CD14-positive monocyte (primary cell): ENCODE measurements at regions of chr20 and their contacts with region 1.

Region 1: DNA sequence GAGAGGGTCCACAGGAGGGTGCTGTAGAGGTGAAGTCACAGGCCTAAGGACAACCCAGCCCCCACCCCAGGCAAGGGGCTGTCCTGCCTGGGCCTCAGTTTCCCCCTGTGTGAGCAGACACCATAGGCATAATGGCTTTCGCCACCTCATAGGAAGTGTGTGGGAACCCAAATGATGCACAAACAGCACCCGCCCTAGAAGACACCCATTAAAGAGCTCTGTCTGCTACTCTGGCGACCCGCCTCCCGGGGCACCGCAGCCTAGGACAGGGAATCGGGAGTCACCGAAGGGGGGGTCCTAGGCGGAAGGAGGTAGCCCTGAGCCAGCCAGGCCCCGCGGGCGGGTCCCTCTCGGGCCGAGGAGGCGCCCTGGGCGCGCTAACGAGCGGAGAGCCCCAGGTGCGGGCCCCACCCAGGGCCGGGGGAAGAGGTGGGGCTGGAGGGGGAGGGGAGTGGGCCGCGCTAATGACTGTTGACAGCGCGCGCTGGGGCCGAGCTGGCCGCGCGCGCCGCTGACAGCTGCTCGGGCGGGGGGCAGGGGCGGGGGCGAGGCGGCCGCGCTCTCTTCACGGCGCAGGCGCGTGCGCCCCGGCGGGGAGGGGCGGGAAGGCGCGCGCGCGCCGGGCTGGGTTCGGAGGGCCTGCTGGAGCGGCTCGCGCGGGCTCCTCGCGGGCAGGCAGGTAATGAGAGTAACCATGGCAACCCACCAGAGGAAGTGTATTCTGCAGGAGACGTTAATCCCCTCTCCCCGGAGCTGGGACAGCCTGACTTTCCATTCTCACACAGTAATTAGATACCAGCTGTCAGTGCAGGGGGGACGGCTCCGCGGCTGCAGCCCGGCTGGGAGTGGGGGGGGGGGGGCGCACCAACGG is 48.9 kb downstream of the NOL4L start:
- DNase-seq: peak in 1 of 3 donors; percentile 33
- H3K4me3 ChIP-seq: peak overlapping the region; percentile 20 to 73 (median 36)
- H3K4me3 Mint-ChIP-seq: peak overlapping the region; percentile 75 to 78
- H3K27ac ChIP-seq: no peak overlapping the region
- H3K27ac Mint-ChIP-seq: peak overlapping the region in 1 of 7 donors; percentile 58
- H3K4me1 ChIP-seq: peaks cover 46 to 56% of the 10 kb centered on the region in 2 donors
- H3K4me1 Mint-ChIP-seq: peaks cover 55% of the 10 kb centered on the region
- H3K27me3 ChIP-seq: no peaks in the 10 kb centered on the region
- H3K27me3 Mint-ChIP-seq: peaks cover 2 to 20% (median 8%) of the 10 kb centered on the region in 3 donors
- CTCF ChIP-seq: no peak

Region 2: DNA sequence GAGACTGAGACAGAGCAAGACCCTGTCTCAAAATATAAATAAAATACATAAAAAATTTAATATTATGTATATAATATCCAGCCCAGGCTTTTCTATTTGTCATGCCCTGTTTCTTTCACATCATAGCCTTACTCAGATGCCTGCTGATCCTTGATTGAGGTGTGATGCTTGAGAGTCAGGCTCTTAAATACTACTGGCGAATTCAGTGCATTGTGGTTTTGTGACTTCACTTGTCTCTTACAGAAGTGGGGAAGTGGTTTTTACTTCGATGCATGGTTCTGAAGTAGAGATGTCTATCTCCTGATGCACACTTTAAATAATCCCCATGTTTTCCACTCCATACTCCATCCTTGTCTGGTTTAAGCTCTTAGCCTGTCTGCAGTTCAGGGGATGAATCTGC is 148.9 kb before region 1 on chr20:
- intact Hi-C with region 1: no loop called
- DNase-seq: no peak
- H3K4me3 ChIP-seq: no peak overlapping the region
- H3K4me3 Mint-ChIP-seq: no peak overlapping the region
- H3K27ac ChIP-seq: no peak overlapping the region
- H3K27ac Mint-ChIP-seq: no peak overlapping the region
- H3K4me1 ChIP-seq: peaks cover 10 to 13% of the 10 kb centered on the region in 2 donors
- H3K4me1 Mint-ChIP-seq: peaks cover 21% of the 10 kb centered on the region
- H3K27me3 ChIP-seq: no peaks in the 10 kb centered on the region
- H3K27me3 Mint-ChIP-seq: no peaks in the 10 kb centered on the region
- CTCF ChIP-seq: no peak

Region 3: DNA sequence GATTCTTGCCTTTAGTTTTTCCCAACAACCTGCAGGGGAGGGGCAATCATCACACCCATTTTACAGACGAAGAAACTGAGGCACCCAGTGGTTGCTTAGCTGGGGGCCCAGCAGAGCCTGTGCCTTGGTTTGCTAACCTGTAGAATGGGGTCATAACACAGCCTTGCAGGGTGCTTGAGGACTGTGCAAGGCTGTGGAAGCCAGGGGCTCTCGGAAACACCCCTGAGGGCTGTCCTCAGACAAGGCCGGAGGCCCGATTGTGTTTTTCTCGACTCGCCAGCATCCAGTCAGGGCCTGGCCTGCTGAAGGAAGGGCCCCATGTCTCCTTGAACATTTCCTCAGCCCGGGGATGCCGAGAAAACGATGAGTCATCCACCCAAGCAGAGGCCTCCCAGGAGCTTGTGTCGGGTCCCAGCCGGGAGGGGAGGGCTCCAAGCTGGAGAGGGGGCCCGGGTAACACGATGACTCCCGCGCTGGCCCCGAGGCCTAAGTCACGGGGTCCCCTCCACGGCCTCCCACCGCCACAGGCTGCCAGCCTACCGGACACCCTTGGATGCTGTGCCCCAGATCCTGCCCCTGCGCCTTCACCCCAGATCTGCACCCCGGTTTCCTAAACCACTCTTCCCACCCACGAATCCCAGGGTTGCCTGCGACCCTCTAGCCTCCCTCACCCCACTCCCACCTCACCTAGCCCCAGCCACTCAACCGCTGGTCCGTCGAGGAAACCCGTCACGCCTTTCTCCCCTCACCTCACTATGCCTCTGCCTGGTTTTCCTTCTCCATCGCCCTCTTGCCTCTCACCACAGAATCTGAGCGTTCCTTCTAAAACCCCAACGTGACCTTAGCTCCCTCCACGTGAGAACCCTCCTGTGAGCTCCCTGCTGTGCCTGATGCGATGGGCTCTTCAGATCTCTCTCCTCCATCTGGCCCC is 38.4 kb after region 1 on chr20:
- intact Hi-C with region 1: loop called in 1 of 2 experiments (anchors 5 kb)
- DNase-seq: peak; percentile 68 to 91 (median 72)
- H3K4me3 ChIP-seq: peak overlapping the region in 1 of 3 experiments; percentile 24
- H3K4me3 Mint-ChIP-seq: peak overlapping the region in 1 of 2 donors; percentile 7
- H3K27ac ChIP-seq: no peak overlapping the region
- H3K27ac Mint-ChIP-seq: peak overlapping the region in 3 of 7 donors; percentile 8 to 57 (median 23)
- H3K4me1 ChIP-seq: peaks cover 24 to 29% of the 10 kb centered on the region in 2 donors
- H3K4me1 Mint-ChIP-seq: peaks cover 27% of the 10 kb centered on the region
- H3K27me3 ChIP-seq: no peaks in the 10 kb centered on the region
- H3K27me3 Mint-ChIP-seq: peaks cover 0 to 2% (median under 1%) of the 10 kb centered on the region in 3 donors
- CTCF ChIP-seq: no peak